Right cardiac atrium (tissue), 5 donors: ENCODE measurements at regions of chr4 and their contacts with region 1.

Region 1: DNA sequence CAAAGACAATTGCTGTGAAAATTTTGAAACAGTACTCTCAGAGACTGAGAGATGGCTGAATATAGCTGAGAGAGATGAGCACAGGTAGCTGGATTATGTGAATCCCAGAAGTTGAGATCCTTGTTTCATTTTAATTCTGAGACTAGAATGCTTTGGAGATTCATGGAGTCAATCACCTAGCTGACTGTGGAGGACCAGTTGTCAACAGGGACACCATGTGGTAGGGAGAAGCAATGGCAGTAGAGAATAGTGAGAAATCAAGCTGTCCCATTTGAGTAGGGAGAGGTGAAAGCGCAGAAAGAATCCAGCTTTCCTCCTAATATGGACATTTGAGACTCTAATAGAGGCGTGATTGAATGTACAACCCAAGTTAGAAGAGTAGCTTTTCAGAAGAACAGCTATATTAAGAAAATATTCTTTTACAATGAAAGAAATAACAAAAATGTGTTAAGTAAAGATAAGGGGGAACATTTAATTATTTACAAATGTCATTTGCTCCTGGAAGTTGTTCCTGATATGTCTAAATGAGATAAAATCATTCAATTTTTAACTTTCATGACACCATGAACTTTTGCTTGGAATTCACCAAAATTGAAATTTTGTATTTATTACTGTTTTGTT is 30.3 kb upstream of the GLRB start:
- DNase-seq: no peak
- ATAC-seq: peak; percentile 83
- H3K4me3 ChIP-seq: no peak overlapping the region
- H3K27ac ChIP-seq: no peak overlapping the region
- H3K4me1 ChIP-seq: no peaks in the 10 kb centered on the region
- H3K27me3 ChIP-seq: no peaks in the 10 kb centered on the region

Region 2: GRCh38 chr4:156475322-156475721 is 570.3 kb before region 1 on chr4:
- intact Hi-C with region 1: loop called in 3 of 4 experiments (anchors 10 kb)
- DNase-seq: no peak
- ATAC-seq: peak in 1 of 2 donors; percentile 66
- H3K4me3 ChIP-seq: no peak overlapping the region
- H3K27ac ChIP-seq: no peak overlapping the region
- H3K4me1 ChIP-seq: no peaks in the 10 kb centered on the region
- H3K27me3 ChIP-seq: no peaks in the 10 kb centered on the region

Region 3: DNA sequence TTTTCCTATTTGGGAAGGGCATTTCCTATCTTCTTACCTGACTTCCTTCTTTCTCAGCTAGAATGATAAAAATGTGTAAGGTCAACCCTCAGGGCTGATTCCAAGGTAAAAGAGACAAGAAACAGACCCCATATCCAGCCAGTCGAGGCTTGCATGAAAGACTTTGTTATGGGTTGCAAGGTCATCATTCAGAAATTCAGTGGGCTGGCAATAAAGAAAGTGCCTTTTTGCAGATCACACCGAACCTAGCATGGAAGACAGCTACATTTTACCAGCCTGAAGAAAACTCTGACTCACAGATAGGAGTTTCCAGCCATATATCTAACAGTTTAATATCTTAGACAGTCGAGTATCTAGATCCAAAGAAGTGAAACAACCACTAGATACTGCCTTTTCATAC is 161.4 kb before region 1 on chr4:
- intact Hi-C with region 1: no loop called
- DNase-seq: no peak
- ATAC-seq: no peak
- H3K4me3 ChIP-seq: no peak overlapping the region
- H3K27ac ChIP-seq: no peak overlapping the region
- H3K4me1 ChIP-seq: no peaks in the 10 kb centered on the region
- H3K27me3 ChIP-seq: no peaks in the 10 kb centered on the region

Region 4: GRCh38 chr4:157121401-157121800 is 75.8 kb after region 1 on chr4:
- intact Hi-C with region 1: no loop called
- DNase-seq: no peak
- ATAC-seq: no peak
- H3K4me3 ChIP-seq: no peak overlapping the region
- H3K27ac ChIP-seq: no peak overlapping the region
- H3K4me1 ChIP-seq: no peaks in the 10 kb centered on the region
- H3K27me3 ChIP-seq: no peaks in the 10 kb centered on the region